Colonic mucosa (tissue), 4 donors: ENCODE measurements at regions of chr16 and their contacts with region 1.

Region 1: GRCh38 chr16:11535471-11535870 is 51.2 kb downstream of the LITAF start:
- DNase-seq: no peak
- H3K4me3 ChIP-seq: no peak overlapping the region
- H3K27ac ChIP-seq: peak overlapping the region; percentile 16
- H3K4me1 ChIP-seq: peaks cover 3% of the 10 kb centered on the region
- H3K27me3 ChIP-seq: no peaks in the 10 kb centered on the region
- CTCF ChIP-seq: no peak

Region 2: GRCh38 chr16:11407047-11407982 is 128.2 kb before region 1 on chr16:
- intact Hi-C with region 1: loop called (anchors 5 kb)
- DNase-seq: peak; percentile 73
- H3K4me3 ChIP-seq: no peak overlapping the region
- H3K27ac ChIP-seq: no peak overlapping the region
- H3K4me1 ChIP-seq: no peaks in the 10 kb centered on the region
- H3K27me3 ChIP-seq: no peaks in the 10 kb centered on the region
- CTCF ChIP-seq: peak; percentile 60

Region 3: DNA sequence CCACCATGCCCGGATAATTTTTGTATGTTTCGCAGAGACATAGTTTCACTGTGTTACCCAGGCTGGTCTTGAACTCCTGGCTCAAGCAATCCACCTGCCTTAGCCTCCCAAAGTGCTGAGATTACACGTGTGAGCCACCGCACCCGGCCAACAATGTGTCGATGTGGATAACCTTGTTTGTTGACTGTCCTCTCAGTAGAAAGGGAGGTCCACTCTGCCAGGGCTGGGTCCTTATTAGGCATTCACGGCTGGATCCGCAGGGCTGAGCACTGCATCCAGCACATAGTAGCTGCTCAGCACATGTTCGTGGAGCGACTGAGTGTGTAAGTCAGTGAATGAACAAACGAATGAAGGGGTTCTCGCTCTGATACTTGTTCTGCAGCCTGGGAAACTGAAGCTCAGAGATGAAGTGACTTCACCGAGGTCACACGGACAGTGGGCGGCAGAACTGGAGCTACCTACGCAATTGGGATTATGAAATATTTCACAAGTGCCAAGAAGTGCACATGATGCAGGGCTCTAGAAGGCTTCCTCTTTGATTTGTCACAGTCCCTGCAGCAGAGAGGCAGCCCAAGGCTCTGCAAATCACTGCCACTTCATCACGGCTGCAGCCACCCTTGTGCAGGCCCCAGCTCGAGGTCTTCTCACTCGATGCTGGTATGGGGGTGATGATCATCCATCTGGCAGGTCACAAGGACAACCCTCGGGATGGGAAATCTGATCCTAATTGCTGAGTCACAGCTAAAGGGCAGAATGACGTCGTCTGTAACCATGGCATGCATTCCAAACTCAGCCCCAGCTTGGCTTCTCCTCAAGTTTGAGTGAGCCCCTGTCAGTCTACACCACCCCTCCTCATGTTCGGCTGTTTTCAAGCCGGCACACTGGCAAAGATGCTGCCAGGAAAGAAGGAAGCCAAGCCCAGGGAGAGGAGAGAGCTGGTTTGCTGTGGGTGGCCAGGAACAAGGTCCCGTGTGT is 104.7 kb after region 1 on chr16:
- intact Hi-C with region 1: loop called (anchors 2 kb)
- DNase-seq: peak; percentile 58
- H3K4me3 ChIP-seq: no peak overlapping the region
- H3K27ac ChIP-seq: peak overlapping the region; percentile 56
- H3K4me1 ChIP-seq: peaks cover 5% of the 10 kb centered on the region
- H3K27me3 ChIP-seq: no peaks in the 10 kb centered on the region
- CTCF ChIP-seq: no peak

Region 4: GRCh38 chr16:11715246-11715947 is 179.9 kb after region 1 on chr16:
- intact Hi-C with region 1: loop called (anchors 5 kb)
- DNase-seq: no peak
- H3K4me3 ChIP-seq: no peak overlapping the region
- H3K27ac ChIP-seq: no peak overlapping the region
- H3K4me1 ChIP-seq: no peaks in the 10 kb centered on the region
- H3K27me3 ChIP-seq: no peaks in the 10 kb centered on the region
- CTCF ChIP-seq: no peak

Region 5: GRCh38 chr16:11783319-11784037 is 248.0 kb after region 1 on chr16:
- intact Hi-C with region 1: no loop called
- DNase-seq: peak; percentile 32
- H3K4me3 ChIP-seq: no peak overlapping the region
- H3K27ac ChIP-seq: peak overlapping the region; percentile 91
- H3K4me1 ChIP-seq: peaks cover 3% of the 10 kb centered on the region
- H3K27me3 ChIP-seq: no peaks in the 10 kb centered on the region
- CTCF ChIP-seq: no peak

Region 6: DNA sequence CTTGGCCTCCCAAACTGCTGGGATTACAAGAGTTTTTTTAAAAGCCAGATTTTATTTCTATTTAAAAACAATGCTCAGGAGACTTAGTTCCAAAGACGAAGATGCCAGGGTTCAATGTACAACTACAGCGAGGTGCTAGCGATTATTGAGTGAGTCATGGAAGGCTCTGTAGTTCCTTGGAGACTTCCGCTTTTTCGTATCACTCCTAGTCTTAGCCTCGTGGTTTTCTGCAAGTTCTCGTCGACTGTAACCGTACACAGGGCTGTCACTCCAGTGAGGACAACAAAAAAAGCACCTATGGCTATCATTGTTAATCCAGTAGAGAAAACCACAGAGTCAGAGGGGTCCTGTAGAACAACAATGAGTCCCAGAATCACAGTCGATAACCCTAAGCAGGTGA is 284.3 kb after region 1 on chr16:
- intact Hi-C with region 1: loop called (anchors 10 kb)
- DNase-seq: no peak
- H3K4me3 ChIP-seq: no peak overlapping the region
- H3K27ac ChIP-seq: no peak overlapping the region
- H3K4me1 ChIP-seq: no peaks in the 10 kb centered on the region
- H3K27me3 ChIP-seq: no peaks in the 10 kb centered on the region
- CTCF ChIP-seq: no peak